Activated CD8-positive, alpha-beta T cell treated with anti-CD3 and anti-CD28 coated beads for 36 hours (primary cell): ENCODE measurements at regions of chr11 and their contacts with region 1.

Region 1: DNA sequence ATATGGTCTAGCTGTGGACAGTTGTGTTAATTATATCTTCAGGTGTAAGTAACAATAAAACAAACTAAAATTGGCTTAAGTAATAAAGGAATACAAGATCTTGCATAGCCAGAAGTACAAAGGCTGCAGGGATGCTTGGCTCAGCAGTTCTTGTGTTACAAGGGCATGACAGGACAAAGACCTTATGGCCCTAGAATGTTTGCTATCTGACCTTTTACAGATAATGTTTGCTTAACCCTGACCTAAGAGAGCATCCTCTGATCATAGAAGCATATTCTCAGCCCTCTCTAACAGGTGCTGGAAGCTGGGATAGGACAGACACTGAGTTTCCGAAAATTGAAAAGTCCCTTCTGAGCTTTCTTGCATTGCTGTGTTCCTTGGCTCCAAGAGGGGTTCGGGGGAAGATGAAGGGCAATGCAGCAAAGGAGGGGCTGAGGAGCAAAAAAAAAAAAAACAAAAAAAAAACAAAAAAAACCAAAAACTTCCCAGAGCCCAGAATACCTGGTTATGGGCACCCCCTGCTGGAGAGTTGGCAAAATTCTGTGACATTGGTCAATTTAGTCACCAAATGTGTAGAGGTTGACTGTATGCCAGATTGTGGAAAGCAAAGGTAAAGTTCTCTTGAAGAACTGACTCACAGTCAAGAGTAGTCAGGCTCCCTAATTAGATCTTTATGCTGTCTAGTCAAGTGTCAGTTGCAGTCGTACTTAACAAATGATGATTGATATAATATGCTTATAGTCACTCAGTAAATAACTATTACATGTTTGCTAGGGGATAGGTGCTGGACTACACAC is 10.4 kb upstream of the HIKESHI start:
- DNase-seq: peak; percentile 85
- ATAC-seq: peak; percentile 43
- H3K4me3 Mint-ChIP-seq: no peak overlapping the region
- H3K27ac Mint-ChIP-seq: peak overlapping the region; percentile 83
- H3K4me1 Mint-ChIP-seq: peaks cover 59% of the 10 kb centered on the region
- H3K27me3 Mint-ChIP-seq: peaks cover 1% of the 10 kb centered on the region
- CTCF ChIP-seq: peak; percentile 86

Region 2: DNA sequence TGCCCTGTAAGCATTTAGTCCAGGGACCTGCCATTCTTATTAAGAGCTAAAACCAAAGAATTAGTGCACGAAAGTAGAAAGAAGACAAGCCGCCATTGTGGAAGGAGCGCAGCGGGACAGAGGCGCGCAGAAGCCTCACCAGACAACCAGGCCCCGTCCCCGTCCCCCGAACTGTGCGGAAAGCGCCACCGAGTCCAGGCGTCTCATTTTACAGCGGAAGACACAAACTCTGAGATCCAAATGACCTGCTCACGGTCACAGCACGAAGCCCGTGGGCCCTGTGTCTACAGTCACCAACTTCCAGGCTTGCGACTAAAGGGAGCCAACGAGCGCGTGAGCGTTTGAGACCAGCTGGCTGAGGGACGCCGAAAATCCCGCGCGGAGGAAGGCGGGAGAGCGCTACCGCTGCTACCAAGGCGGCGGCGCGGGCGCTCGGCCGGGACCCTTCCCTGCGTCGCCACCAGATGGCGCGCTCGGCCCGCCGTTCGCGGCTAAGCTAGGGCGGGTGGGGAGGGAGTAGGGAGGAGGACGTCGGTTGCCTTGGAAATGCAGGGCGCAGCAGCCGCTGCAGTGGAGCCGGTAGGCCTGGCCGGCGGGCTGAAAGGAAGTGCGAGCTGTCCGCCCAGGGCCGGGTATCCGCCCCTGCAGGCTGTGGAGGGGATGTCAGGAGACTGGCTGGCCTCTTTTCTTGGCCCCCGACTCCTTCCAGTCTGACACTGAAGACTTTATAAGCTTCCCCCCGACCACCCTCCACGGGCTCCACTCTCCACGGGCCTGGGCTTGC is 436.9 kb before region 1 on chr11:
- CTCF ChIA-PET with region 1: interaction called, 9 read pairs
- POLR2A ChIA-PET with region 1: interaction called, 3 read pairs
- intact Hi-C with region 1: loop called (anchors 10 kb)
- DNase-seq: peak; percentile 89
- ATAC-seq: peak; percentile 96
- H3K4me3 Mint-ChIP-seq: peak overlapping the region; percentile 89
- H3K27ac Mint-ChIP-seq: peak overlapping the region; percentile 93
- H3K4me1 Mint-ChIP-seq: peaks cover 10% of the 10 kb centered on the region
- H3K27me3 Mint-ChIP-seq: no peaks in the 10 kb centered on the region
- CTCF ChIP-seq: peak; percentile 89

Region 3: GRCh38 chr11:86041975-86042378 is 249.7 kb before region 1 on chr11:
- CTCF ChIA-PET with region 1: interaction called, 5 read pairs
- POLR2A ChIA-PET with region 1: interaction called, 4 read pairs
- intact Hi-C with region 1: loop called (anchors 2 kb)
- DNase-seq: peak; percentile 68
- ATAC-seq: peak; percentile 82
- H3K4me3 Mint-ChIP-seq: no peak overlapping the region
- H3K27ac Mint-ChIP-seq: peak overlapping the region; percentile 49
- H3K4me1 Mint-ChIP-seq: peaks cover 66% of the 10 kb centered on the region
- H3K27me3 Mint-ChIP-seq: no peaks in the 10 kb centered on the region
- CTCF ChIP-seq: peak; percentile 80

Region 4: GRCh38 chr11:86218125-86219084 is 73.3 kb before region 1 on chr11:
- CTCF ChIA-PET with region 1: interaction called, 12 read pairs
- POLR2A ChIA-PET with region 1: interaction called, 3 read pairs
- intact Hi-C with region 1: no loop called
- DNase-seq: peak; percentile 69
- ATAC-seq: peak; percentile 48
- H3K4me3 Mint-ChIP-seq: peak overlapping the region; percentile 48
- H3K27ac Mint-ChIP-seq: peak overlapping the region; percentile 86
- H3K4me1 Mint-ChIP-seq: peaks cover 67% of the 10 kb centered on the region
- H3K27me3 Mint-ChIP-seq: peaks cover 3% of the 10 kb centered on the region
- CTCF ChIP-seq: peak; percentile 86

Region 5: DNA sequence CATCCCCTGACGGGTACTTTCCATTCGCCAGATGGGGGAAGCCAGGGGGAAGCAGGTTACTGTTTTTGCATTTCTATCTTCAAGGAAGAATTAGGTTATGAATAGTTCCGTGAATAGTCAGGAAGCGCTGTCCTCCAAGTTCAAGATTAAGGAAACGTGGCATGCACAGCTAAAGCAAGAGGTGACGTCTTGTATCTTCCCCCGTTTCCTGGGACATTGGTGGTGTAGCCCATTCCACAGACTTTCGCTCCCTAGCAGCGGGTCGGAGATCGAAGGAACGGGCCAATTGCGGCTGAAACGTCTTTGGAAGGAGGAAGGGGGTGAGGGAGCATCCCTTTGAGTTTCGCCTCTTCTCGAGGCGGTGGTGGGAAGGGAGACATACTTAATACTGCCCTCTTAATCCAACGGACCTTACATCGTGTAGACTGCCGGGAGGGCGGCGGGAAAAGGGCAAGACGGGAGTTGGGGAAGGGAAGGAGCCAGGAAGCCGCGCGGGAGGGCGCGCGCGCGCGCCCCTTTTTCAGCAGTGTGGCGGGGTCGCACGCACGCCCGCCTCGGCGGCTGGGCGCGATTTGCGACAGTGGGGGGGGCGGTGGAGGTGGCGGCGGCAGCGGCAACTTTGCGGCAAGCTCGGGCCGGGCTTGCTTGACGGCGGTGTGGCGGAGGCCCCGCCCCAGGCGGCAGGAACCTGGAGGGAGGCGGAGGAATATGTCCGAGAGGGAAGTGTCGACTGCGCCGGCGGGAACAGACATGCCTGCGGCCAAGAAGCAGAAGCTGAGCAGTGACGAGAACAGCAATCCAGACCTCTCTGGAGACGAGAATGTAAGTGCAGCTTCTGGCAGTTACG is 46.9 kb before region 1 on chr11 and contains the start of gene EED:
- CTCF ChIA-PET with region 1: interaction called, 6 read pairs
- POLR2A ChIA-PET with region 1: interaction called, 5 read pairs
- intact Hi-C with region 1: loop called (anchors 5 kb)
- DNase-seq: peak; percentile 95
- ATAC-seq: peak; percentile 87
- H3K4me3 Mint-ChIP-seq: no peak within 1 kb of the TSS
- H3K27ac Mint-ChIP-seq: no peak within 1 kb of the TSS
- H3K4me1 Mint-ChIP-seq: peaks cover 32% of the 10 kb centered on the region
- H3K27me3 Mint-ChIP-seq: no peaks in the 10 kb centered on the region
- CTCF ChIP-seq: no peak
- total RNA-seq, gene EED: 114 to 117 TPM

Region 6: DNA sequence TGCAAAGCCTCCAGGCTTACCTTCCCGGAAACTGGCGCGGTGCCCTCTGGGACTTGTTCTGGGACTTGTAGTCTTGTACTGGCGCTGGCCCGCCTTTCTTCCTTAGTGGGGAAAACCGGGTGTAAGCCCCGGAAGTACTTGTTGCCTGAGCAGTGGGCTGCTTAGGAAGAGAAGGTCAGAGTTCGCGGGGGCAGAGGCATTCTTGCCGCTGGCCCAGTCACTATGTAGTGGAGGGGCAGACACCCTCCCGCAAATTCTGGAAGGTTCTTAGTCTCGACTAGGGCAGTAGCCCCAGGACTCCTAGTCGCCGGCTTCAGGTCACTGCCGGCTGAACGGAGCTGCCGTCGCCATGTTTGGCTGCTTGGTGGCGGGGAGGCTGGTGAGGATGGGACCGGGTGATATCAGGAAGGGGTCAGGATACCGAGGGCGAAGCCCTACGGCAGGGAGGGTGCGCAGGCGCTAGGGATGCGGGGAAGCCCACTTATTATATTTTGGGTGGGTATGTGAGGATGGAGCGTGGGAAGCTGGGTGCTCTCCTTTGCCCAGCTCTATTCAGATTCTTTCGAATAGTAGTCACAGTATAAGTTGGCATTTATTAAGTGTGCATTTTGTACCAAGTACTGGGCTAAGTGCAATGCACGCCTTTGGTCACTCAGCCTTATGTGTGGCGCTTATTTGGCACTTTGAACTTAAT is 10.6 kb after region 1 on chr11 and contains the start of gene HIKESHI:
- CTCF ChIA-PET with region 1: interaction called, 13 read pairs
- POLR2A ChIA-PET with region 1: interaction called, 3 read pairs
- intact Hi-C with region 1: no loop called
- DNase-seq: peak; percentile 97
- ATAC-seq: peak; percentile 98
- H3K4me3 Mint-ChIP-seq: peak within 1 kb of the TSS; percentile 89
- H3K27ac Mint-ChIP-seq: peak within 1 kb of the TSS; percentile 97
- H3K4me1 Mint-ChIP-seq: peaks cover 31% of the 10 kb centered on the region
- H3K27me3 Mint-ChIP-seq: no peaks in the 10 kb centered on the region
- CTCF ChIP-seq: no peak
- total RNA-seq, gene HIKESHI: 59.6 to 60.5 TPM